K562 (cell line): ENCODE measurements at regions of chr14 and their contacts with region 1.

Region 1: DNA sequence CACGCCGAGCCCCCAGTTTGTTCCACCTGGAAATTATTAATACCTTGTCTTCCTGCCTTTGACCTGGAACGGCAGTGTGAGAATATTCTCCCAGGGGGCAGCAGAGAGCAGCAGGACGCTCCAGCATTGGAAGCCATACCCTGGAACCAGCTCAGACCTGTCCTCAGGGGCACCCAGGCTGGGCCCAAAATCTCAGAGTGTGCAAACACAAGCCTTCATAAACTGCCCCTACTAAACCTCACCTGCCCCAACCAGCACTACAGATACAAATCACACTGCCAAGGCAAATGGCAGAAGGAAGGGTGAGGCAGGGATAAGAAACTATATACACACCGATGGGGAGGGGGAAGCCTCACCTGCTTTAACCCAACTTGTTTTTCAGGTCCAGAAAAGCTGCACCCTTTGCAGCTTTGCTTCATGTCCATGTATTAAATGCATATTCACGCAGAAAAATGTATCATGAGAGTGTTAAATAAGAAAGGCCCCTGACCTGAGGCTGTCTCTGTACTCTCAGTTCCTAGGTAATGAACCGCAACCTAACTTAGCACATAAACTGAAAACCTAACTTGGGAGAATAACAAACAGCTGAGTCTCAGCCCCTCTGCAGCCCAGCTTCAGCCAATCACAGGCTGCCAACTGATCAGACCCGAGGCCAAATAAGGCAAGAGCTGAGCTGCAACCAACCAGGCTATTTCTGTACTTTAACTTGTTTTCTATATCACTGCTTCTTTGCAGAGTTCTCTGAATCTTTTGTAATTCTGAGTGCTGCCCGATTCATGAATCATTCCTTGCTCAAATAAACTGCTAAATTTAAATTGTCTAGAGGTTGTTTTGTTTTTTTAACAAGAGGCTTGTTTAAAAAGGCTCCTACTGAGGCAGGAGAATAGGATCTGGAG is 130.1 kb downstream of the SPTSSA start:
- DNase-seq: peak; percentile 41 to 73 (median 44)
- ATAC-seq: peak; percentile 97
- H3K4me3 ChIP-seq: no peak overlapping the region
- H3K27ac ChIP-seq: 0 out of 3 replicates have a peak overlapping the region, but pooled peaks have one; percentile 32
- H3K4me1 ChIP-seq: no peaks in the 10 kb centered on the region; a peak in 1 of 5 replicates
- H3K27me3 ChIP-seq: no peaks in the 10 kb centered on the region
- CTCF ChIP-seq: peak; percentile 77
- EP300 ChIP-seq: no peak
- POLR2A ChIP-seq: no peak
- RAD21 ChIP-seq: peak; percentile 47 to 78

Region 2: DNA sequence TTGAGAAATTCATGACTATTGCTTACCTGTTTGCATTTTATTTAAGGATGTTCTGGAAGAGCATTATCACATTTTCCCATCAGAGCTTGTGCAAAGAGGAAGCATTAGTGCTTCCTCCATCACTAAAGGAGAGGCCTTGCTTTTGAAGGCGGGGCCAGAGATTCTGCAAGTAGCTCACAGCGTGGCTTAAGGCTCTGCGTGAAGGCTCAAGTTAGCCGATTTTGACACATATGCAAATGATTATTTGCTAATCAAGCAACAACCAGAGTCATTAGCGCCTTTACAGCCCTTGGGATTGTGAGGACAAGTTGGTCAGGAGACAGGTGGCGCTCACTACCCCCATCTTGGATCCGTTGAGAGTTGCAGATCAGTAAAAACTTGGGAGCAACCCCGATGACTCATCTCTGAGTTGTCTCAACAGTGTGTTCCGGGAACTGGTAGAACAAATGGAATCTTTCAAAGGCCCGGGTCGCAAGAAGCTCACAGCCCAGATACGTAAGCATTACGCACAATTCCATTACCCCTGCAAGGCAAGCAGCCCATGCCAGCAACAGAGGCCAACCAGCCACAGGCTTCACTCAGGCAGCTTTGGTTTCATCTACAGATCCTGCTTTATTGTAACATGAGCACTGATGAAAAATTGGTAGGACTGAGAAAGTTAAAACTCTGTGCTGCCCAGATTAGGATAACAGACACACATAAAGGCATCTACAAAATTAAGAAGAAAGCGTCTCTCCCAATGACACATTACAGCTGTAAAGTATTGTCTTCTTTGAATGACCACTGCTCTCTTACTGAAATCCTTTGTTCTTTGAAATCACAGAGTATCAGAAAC is 164.9 kb after region 1 on chr14:
- CTCF ChIA-PET with region 1: interaction called, 3 read pairs
- POLR2A ChIA-PET with region 1: no interaction called
- in situ Hi-C with region 1: no loop called
- intact Hi-C with region 1: loop called (anchors 2 kb)
- DNase-seq: peak; percentile 68 to 88 (median 76)
- ATAC-seq: peak; percentile 87
- H3K4me3 ChIP-seq: no peak overlapping the region
- H3K27ac ChIP-seq: peak overlapping the region; percentile 81
- H3K4me1 ChIP-seq: peaks cover 0 to 14% of the 10 kb centered on the region in 2 experiments; a peak in 3 of 5 replicates
- H3K27me3 ChIP-seq: no peaks in the 10 kb centered on the region
- CTCF ChIP-seq: peak; percentile 10 to 46 (median 37); a peak in 3 of 6 replicates
- EP300 ChIP-seq: 0 out of 2 replicates have a peak, but pooled peaks have one; percentile 30
- POLR2A ChIP-seq: peak; percentile 56
- RAD21 ChIP-seq: peak; percentile 9 to 23; a peak in 2 of 4 replicates

Region 3: DNA sequence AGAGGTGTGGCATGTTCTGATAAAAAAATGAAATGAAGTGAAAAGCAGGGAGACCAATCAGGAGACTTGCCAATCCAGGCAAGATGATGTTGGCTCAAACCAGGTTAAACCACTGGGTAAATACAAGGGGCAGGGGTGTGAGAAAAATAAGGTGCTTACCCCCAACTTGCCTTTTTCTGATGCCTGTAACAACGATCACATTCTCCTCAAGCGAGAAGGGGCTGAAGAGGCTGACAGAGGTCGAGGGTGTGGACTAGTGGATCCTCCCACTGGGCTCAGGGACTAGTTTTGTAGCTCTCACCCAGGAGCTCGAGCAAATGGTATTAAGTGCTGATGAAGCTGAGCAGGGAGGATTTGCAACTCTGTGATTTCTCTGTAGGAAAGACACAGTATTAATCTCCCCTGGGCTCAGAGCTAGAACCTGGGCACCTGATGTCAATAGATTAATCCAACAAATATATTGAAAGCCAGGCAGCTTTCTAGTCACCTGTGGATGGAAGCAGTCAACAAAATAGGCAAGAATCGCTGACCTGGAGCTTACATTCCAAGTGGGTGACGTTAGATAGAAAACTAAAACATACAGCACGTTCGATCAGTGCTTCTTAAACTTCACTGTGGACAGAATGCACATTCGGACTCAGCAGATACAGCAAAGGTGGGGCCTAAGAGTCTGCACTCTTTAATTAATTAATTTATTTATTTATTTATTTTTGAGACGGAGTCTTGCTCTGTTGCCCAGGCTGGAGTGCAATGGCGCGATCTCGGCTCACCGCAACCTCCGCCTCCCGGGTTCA is 222.8 kb after region 1 on chr14:
- CTCF ChIA-PET with region 1: no interaction called
- POLR2A ChIA-PET with region 1: no interaction called
- in situ Hi-C with region 1: no loop called
- intact Hi-C with region 1: loop called (anchors 5 kb)
- DNase-seq: peak in 2 of 4 experiments; percentile 16 to 17
- ATAC-seq: no peak
- H3K4me3 ChIP-seq: no peak overlapping the region
- H3K27ac ChIP-seq: no peak overlapping the region; the same call in 2 of the 3 replicates
- H3K4me1 ChIP-seq: peaks cover 0 to 6% of the 10 kb centered on the region in 2 experiments; a peak in 3 of 5 replicates
- H3K27me3 ChIP-seq: no peaks in the 10 kb centered on the region
- CTCF ChIP-seq: no peak
- EP300 ChIP-seq: no peak
- POLR2A ChIP-seq: no peak
- RAD21 ChIP-seq: no peak